Activated B cell treated with CpG ODN at 0.5 μM for 24 hours (primary cell): ENCODE measurements at regions of chr9 and their contacts with region 1.

Region 1: DNA sequence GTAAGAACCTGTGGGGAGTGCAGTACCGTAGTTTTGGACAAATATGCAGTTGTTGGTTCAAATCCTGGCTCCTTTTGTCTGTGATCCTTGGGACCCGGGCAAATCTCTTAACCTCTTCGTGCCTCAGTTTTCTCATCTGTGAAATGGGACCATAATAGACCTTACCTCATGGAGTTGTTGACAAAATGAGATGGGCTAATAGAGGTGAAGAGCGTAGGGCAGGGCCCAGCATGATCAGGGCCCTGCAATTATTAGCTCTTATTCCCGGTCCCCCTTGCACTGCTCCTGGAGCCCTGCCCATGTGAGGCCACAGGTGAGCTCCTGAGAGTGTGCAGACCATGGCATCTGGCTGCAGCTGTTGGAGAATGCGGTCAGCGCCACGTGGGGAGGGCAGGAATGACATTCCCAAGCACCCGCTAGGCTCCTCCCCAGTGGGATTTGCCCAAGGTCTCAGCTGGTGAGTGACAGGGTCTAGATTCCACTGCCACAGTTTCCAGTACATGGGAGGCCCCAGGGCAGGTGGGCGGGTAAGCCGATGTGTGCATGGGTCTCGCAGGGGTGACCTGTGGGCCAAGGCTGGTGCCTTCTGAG is 41.0 kb downstream of the NEK6 start:
- DNase-seq: no peak
- ATAC-seq: no peak
- H3K4me3 Mint-ChIP-seq: no peak overlapping the region
- H3K27ac Mint-ChIP-seq: no peak overlapping the region
- H3K4me1 Mint-ChIP-seq: peaks cover 66% of the 10 kb centered on the region
- H3K27me3 Mint-ChIP-seq: no peaks in the 10 kb centered on the region
- CTCF ChIP-seq: no peak

Region 2: DNA sequence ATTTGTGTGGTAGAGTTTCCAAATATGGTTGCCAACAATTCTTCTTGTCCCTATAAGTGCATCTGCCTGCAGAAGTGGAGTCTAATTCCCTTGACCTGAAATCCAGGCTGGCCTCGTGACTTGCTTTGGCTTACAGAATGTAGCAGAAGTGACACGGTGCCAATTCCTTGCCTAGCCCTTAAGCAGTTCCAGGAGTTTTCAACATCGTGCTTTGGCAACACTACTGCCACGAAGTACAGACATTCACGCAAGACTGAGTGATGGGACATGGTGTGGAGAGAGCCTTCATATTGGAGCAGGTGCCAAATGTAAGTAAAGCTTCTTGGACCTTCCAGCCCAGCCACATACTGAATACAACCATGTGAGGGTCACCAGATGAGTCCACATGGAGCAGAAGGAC is 133.9 kb before region 1 on chr9:
- CTCF ChIA-PET with region 1: no interaction called
- POLR2A ChIA-PET with region 1: interaction called, 13 read pairs
- intact Hi-C with region 1: no loop called
- DNase-seq: no peak
- ATAC-seq: no peak
- H3K4me3 Mint-ChIP-seq: no peak overlapping the region
- H3K27ac Mint-ChIP-seq: no peak overlapping the region
- H3K4me1 Mint-ChIP-seq: no peaks in the 10 kb centered on the region
- H3K27me3 Mint-ChIP-seq: no peaks in the 10 kb centered on the region
- CTCF ChIP-seq: no peak